Left ventricle myocardium superior (tissue), 1 donor: ENCODE measurements at regions of chr12 and their contacts with region 1.

Region 1: DNA sequence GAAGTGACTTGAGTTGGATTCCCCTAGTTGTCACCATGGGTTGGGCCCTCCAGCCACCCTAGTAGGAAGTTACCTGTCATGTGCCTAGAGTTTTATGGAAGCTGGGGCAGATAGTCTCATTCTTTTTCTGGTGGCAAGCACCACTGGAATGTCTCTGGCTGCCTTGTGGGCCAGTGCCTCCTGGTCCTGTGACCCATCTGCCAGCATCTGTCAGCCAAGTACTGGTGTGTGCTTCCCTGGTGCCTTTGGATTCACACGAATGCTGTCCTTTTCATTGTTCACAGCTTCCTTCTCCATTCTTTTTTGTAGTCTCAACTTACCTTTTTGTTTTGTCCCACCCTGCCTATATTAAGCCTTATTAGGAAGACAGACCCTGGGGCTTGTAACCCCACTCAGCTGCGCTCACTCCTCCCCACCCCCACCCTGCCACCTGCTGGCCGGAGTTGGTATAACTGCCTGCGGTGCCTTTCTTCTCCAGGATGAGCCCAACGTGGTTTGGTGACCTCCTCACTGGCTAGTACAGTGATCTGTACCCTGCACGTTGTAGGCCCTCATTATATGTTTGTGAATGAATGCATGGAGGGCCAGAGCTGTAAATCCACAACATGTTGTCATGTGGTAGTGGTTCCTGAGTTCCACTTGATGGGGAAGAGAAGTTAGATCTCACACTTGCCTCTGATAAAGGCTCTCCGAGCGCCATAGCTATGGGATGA is 125.7 kb downstream of the TSPAN9 start:
- DNase-seq: peak; percentile 69
- ATAC-seq: peak; percentile 39

Region 2: DNA sequence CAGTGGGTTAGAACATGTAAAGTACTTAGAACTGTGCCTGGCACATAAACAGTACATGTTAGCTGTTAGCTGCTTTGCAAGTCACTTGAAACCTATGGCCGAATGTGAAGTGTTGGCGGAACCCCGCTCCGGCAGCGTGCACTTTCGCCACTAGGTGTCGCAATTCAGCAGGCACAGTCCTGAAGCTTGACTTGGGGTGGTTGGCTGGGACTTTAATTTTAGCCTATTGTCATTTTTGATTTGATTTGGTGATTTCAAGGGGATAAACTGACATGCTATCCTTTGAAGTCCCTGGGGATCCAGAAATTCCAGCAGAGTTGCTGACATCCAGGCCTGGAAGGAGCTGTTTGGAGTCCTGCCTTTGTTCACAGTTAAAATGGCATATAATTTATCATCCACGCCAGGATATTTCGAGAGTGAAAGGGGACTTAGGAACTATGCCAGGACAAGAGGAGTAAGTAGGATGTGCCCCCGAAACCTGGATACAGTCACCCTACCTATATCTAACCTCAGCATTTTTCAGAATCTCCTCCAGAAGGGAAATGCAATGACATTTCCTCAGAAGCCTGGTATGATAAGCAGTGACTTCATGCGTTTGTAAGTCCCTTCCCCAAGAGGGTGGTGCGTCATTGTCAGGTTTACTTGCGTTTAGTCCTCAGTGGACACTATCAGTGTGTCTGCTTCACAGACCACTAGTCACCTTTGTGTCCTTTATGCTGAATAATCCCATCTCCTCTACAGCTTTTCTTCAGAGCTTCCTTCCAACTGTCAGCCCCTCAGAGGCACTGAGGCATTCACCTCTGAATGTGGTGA is 129.2 kb before region 1 on chr12:
- intact Hi-C with region 1: no loop called
- DNase-seq: peak; percentile 89
- ATAC-seq: peak; percentile 24

Region 3: DNA sequence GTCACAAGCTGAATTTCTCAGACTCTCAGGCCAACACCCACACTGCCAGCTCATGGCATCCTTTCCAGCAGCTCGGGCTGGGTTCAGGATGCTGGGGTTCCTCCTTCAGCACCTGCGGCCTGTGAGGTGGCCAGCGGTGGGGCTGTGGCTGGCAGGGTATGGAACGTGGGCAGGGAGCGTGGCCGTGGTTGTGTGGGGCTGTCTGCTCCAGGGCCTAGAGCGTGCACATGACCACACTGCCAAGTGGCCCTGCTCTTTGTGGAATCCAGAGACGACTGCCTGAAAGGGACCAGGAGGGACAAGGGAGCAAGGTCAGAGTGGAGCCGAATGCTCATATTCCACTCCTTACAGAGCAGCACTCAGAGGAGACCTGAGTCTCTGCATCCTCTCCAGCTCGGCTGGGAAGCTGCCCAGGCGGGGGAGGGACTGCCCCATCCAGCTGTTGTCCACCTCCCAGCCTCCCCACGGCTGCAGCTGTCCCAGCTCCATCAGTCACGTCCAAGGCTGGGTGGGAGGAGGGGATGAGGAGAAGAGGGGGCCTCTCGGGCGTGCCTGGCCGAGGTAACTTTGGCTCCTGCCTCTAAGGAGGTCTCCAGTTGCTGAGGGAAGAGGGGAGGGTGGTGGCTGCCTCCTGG is 54.4 kb before region 1 on chr12:
- intact Hi-C with region 1: loop called (anchors 10 kb)
- DNase-seq: peak; percentile 78
- ATAC-seq: peak; percentile 39

Region 4: DNA sequence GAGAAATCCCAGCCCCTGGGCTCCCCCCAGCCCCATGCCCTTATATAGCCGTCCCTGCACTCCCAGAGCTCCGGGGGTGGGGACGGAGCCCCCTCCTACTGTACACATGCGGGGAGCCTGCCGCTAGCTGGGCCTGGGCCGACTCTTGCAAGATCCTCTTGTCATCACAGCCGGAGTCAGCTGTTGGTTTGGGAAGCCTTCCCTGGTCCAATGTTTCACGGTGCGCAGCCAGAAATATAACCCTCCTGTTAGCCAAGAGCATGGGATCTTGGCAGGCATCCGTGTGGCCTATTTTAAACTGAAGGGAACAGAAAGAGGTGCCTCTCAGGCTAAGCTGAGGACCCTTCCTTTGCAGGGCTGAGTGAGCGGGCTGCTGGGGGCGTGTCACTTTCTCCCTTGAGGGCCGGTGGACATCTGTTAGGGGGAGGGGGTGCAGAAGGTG is 49.6 kb after region 1 on chr12:
- intact Hi-C with region 1: loop called (anchors 10 kb)
- DNase-seq: peak; percentile 92
- ATAC-seq: peak; percentile 61